ENCODE measurements at regions of chr4 and their contacts with region 1.

Region 1: GRCh38 chr4:140851032-140851636 is 94.9 kb upstream of the TBC1D9 start:
- DNase-seq: peak; percentile 48 to 70
- H3K4me3 ChIP-seq: no peak overlapping the region
- H3K4me3 Mint-ChIP-seq: no peak overlapping the region
- H3K27ac Mint-ChIP-seq: no peak overlapping the region
- H3K4me1 ChIP-seq: peaks cover 3% of the 10 kb centered on the region; the same call in 1 of the 2 replicates
- H3K4me1 Mint-ChIP-seq: peaks cover 5% of the 10 kb centered on the region
- H3K27me3 ChIP-seq: no peaks in the 10 kb centered on the region
- H3K27me3 Mint-ChIP-seq: no peaks in the 10 kb centered on the region
- CTCF ChIP-seq: peak; percentile 64 to 71

Region 2: GRCh38 chr4:140359562-140360427 is 491.3 kb before region 1 on chr4:
- CTCF ChIA-PET with region 1: interaction called, 14 read pairs
- POLR2A ChIA-PET with region 1: interaction called, 3 read pairs
- intact Hi-C with region 1: loop called (anchors 1 kb)
- DNase-seq: peak; percentile 79 to 83
- H3K4me3 ChIP-seq: no peak overlapping the region
- H3K4me3 Mint-ChIP-seq: no peak overlapping the region
- H3K27ac Mint-ChIP-seq: no peak overlapping the region
- H3K4me1 ChIP-seq: peaks cover 24% of the 10 kb centered on the region
- H3K4me1 Mint-ChIP-seq: peaks cover 13% of the 10 kb centered on the region
- H3K27me3 ChIP-seq: no peaks in the 10 kb centered on the region
- H3K27me3 Mint-ChIP-seq: no peaks in the 10 kb centered on the region
- CTCF ChIP-seq: peak; percentile 67 to 80

Region 3: DNA sequence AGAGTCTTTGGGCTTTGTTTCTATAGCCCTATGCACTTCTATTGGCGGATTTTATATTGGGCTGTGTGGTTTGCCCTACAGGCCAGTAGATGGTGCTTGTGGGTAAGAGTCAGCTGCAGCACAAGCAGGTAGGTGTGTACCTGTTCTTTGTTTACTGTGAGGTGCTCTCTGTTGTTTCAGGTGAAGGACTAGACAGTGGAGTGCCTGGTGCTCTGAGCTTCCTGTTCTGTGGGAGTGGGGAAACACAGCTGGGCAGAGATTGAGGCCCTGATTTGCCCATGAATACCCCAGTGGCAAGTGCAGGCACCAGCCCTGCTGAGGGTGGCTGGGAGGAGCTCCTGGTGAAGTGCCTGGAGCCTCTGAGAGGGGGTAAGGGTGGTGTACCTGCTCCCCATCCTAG is 256.1 kb before region 1 on chr4:
- CTCF ChIA-PET with region 1: interaction called, 15 read pairs
- POLR2A ChIA-PET with region 1: no interaction called
- intact Hi-C with region 1: loop called (anchors 1 kb)
- DNase-seq: peak; percentile 59 to 69
- H3K4me3 ChIP-seq: no peak overlapping the region
- H3K4me3 Mint-ChIP-seq: no peak overlapping the region
- H3K27ac Mint-ChIP-seq: no peak overlapping the region
- H3K4me1 ChIP-seq: no peaks in the 10 kb centered on the region
- H3K4me1 Mint-ChIP-seq: no peaks in the 10 kb centered on the region
- H3K27me3 ChIP-seq: no peaks in the 10 kb centered on the region
- H3K27me3 Mint-ChIP-seq: peaks cover 21% of the 10 kb centered on the region
- CTCF ChIP-seq: peak; percentile 52 to 77

Region 4: GRCh38 chr4:140626661-140627376 is 224.3 kb before region 1 on chr4:
- CTCF ChIA-PET with region 1: no interaction called
- POLR2A ChIA-PET with region 1: no interaction called
- intact Hi-C with region 1: loop called (anchors 1 kb)
- DNase-seq: no peak
- H3K4me3 ChIP-seq: no peak overlapping the region
- H3K4me3 Mint-ChIP-seq: no peak overlapping the region
- H3K27ac Mint-ChIP-seq: no peak overlapping the region
- H3K4me1 ChIP-seq: no peaks in the 10 kb centered on the region
- H3K4me1 Mint-ChIP-seq: peaks cover 7% of the 10 kb centered on the region
- H3K27me3 ChIP-seq: no peaks in the 10 kb centered on the region
- H3K27me3 Mint-ChIP-seq: no peaks in the 10 kb centered on the region
- CTCF ChIP-seq: no peak

Region 5: GRCh38 chr4:141346144-141346543 is 495.0 kb after region 1 on chr4:
- CTCF ChIA-PET with region 1: no interaction called
- POLR2A ChIA-PET with region 1: no interaction called
- intact Hi-C with region 1: no loop called
- DNase-seq: peak in 1 of 2 experiments; percentile 11
- H3K4me3 ChIP-seq: no peak overlapping the region
- H3K4me3 Mint-ChIP-seq: no peak overlapping the region
- H3K27ac Mint-ChIP-seq: no peak overlapping the region
- H3K4me1 ChIP-seq: no peaks in the 10 kb centered on the region
- H3K4me1 Mint-ChIP-seq: no peaks in the 10 kb centered on the region
- H3K27me3 ChIP-seq: no peaks in the 10 kb centered on the region
- H3K27me3 Mint-ChIP-seq: peaks cover 12% of the 10 kb centered on the region
- CTCF ChIP-seq: peak in 1 of 2 experiments; percentile 28